GM12878 (cell line): ENCODE measurements at regions of chr14 and their contacts with region 1.

Region 1: GRCh38 chr14:95442633-95443021 is 73.8 kb downstream of the SYNE3 start:
- DNase-seq: peak; percentile 28
- ATAC-seq: peak; percentile 98
- H3K4me3 ChIP-seq: no peak overlapping the region
- H3K27ac ChIP-seq: no peak overlapping the region
- H3K4me1 ChIP-seq: no peaks in the 10 kb centered on the region
- H3K27me3 ChIP-seq: no peaks in the 10 kb centered on the region
- CTCF ChIP-seq: peak; percentile 78 to 92 (median 87)
- EP300 ChIP-seq: no peak
- POLR2A ChIP-seq: no peak
- RAD21 ChIP-seq: peak; percentile 95

Region 2: DNA sequence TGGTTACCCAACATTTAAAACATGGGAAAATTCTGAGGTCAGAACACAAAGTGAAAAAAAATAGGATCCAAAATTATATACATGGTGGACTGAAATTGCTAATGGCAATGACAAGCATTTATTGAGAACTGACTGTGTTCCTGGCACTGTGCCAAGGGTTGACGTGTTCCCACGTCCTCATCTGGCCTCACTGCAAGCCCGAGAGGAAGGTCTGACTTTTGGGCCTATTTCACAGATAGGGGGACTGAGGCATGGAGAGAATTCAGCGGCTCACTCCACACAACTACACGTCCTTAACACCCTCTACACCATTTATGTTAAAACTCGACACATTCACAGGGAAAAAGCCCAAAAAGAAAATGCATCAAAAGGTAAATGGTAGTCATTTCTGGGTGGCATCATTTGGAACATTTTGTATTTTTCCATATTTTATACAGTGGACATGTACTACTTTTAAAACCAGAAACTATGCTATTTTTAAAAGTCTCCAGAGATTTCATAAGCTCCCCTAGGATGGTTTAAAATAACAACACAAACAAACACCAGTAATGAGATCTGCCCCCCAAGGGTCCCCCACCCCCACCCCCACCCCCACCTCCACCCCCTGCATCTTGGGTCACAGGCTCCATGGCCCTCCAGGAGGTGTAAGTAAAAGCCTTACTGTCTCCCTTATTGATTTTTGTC is 150.6 kb before region 1 on chr14:
- CTCF ChIA-PET with region 1: no interaction called
- POLR2A ChIA-PET with region 1: no interaction called
- RAD21 ChIA-PET with region 1: no interaction called
- SMC1A ChIA-PET with region 1: no interaction called
- in situ Hi-C with region 1: no loop called
- intact Hi-C with region 1: no loop called
- DNase-seq: no peak
- ATAC-seq: peak; percentile 43; the same call in 2 of the 3 replicates
- H3K4me3 ChIP-seq: no peak overlapping the region
- H3K27ac ChIP-seq: no peak overlapping the region
- H3K4me1 ChIP-seq: 0 out of 2 replicates have a peak, but pooled peaks cover 3% of the 10 kb centered on the region
- H3K27me3 ChIP-seq: no peaks in the 10 kb centered on the region
- CTCF ChIP-seq: no peak
- EP300 ChIP-seq: no peak
- POLR2A ChIP-seq: no peak
- RAD21 ChIP-seq: no peak

Region 3: GRCh38 chr14:95424529-95424928 is 18.1 kb before region 1 on chr14:
- CTCF ChIA-PET with region 1: interaction called, 11 read pairs
- POLR2A ChIA-PET with region 1: no interaction called
- RAD21 ChIA-PET with region 1: interaction called, 6 read pairs
- SMC1A ChIA-PET with region 1: interaction called, 10 read pairs
- in situ Hi-C with region 1: no loop called
- intact Hi-C with region 1: no loop called
- DNase-seq: no peak
- ATAC-seq: no peak
- H3K4me3 ChIP-seq: no peak overlapping the region
- H3K27ac ChIP-seq: no peak overlapping the region
- H3K4me1 ChIP-seq: no peaks in the 10 kb centered on the region
- H3K27me3 ChIP-seq: no peaks in the 10 kb centered on the region
- CTCF ChIP-seq: no peak
- EP300 ChIP-seq: no peak
- POLR2A ChIP-seq: no peak
- RAD21 ChIP-seq: no peak

Region 4: DNA sequence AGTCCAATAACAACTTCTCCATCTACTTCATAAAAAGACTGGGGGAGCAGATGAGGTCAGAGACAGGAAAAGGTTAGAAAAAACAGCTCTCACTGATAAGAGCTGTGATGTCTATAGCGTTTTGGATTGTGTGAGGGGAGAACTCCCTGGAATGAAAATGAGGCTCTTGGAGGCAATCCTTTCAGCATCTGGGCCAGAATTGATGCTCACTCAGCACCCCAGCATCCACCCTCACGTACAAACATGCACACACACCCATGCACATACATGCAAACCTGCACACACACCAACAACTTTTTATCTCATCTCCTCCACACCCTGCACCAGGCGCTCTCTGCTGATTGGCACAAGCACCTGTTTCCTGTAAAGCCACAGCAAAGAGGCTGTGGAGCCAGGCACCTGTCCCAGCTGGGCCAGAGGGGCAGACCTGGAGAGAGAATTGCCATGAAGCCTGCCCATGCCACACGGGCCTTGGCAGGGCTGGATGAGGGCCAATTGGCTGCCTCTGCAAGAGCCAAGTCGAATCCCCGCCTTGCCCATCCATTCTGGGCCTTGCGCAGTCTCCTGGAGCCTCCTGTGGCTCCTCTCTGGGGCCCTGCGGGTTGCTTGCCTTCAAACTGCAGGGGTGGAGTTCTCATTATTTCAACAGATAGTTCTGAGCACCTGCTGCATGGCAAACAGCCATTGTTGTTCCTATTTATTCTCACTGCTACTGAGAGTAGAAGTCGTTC is 20.7 kb after region 1 on chr14:
- CTCF ChIA-PET with region 1: interaction called, 18 read pairs
- POLR2A ChIA-PET with region 1: no interaction called
- RAD21 ChIA-PET with region 1: interaction called, 5 read pairs
- SMC1A ChIA-PET with region 1: interaction called, 5 read pairs
- in situ Hi-C with region 1: no loop called
- intact Hi-C with region 1: no loop called
- DNase-seq: no peak
- ATAC-seq: no peak
- H3K4me3 ChIP-seq: no peak overlapping the region
- H3K27ac ChIP-seq: no peak overlapping the region
- H3K4me1 ChIP-seq: peaks cover 16% of the 10 kb centered on the region
- H3K27me3 ChIP-seq: no peaks in the 10 kb centered on the region
- CTCF ChIP-seq: no peak
- EP300 ChIP-seq: no peak
- POLR2A ChIP-seq: no peak
- RAD21 ChIP-seq: no peak

Region 5: GRCh38 chr14:95495538-95496025 is 53.0 kb after region 1 on chr14:
- CTCF ChIA-PET with region 1: interaction called, 10 read pairs
- POLR2A ChIA-PET with region 1: no interaction called
- RAD21 ChIA-PET with region 1: interaction called, 9 read pairs
- SMC1A ChIA-PET with region 1: interaction called, 8 read pairs
- in situ Hi-C with region 1: no loop called
- intact Hi-C with region 1: no loop called
- DNase-seq: peak; percentile 94
- ATAC-seq: peak; percentile 90
- H3K4me3 ChIP-seq: peak overlapping the region; percentile 37; the same call in 1 of the 2 replicates
- H3K27ac ChIP-seq: peak overlapping the region; percentile 98
- H3K4me1 ChIP-seq: peaks cover 60% of the 10 kb centered on the region
- H3K27me3 ChIP-seq: no peaks in the 10 kb centered on the region
- CTCF ChIP-seq: no peak
- EP300 ChIP-seq: peak; percentile 66 to 95
- POLR2A ChIP-seq: peak; percentile 66
- RAD21 ChIP-seq: peak; percentile 17; the same call in 1 of the 2 replicates

Region 6: DNA sequence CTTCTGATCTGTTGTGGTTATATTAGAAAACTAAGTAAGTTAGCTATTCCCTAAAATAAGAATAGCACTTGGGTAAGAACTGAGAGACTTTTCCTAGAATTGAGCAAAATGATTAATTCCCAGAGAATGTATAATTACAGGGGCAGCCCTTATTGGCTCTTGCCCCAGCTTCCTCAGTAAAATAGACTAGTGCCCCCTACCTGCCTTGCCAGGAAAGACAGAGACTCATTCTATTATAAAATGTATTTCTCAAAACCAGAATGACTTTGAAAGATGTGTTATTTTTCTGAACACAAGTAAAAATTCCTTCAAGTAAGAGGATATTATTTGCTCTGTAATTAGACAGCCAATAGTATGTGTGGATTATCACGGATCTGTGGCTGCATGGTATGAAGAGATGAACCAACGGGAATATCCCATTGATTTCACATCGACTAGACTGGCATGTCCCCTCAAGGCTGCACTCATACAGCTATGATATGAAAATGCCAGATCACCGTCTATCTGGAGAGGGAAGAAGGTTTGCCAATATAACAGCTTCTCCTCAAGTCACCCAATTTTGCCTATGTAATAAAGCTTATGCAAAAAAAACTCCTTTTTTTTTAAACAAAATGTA is 84.9 kb after region 1 on chr14:
- CTCF ChIA-PET with region 1: interaction called, 525 read pairs
- POLR2A ChIA-PET with region 1: interaction called, 10 read pairs
- RAD21 ChIA-PET with region 1: interaction called, 171 read pairs
- SMC1A ChIA-PET with region 1: interaction called, 187 read pairs
- in situ Hi-C with region 1: loop called (anchors 5 kb)
- intact Hi-C with region 1: loop called (anchors 1 kb)
- DNase-seq: no peak
- ATAC-seq: peak; percentile 71
- H3K4me3 ChIP-seq: no peak overlapping the region
- H3K27ac ChIP-seq: no peak overlapping the region
- H3K4me1 ChIP-seq: no peaks in the 10 kb centered on the region; the same call in 1 of the 2 replicates
- H3K27me3 ChIP-seq: no peaks in the 10 kb centered on the region
- CTCF ChIP-seq: peak; percentile 59 to 74 (median 71); a peak in 5 of 6 replicates
- EP300 ChIP-seq: no peak
- POLR2A ChIP-seq: no peak
- RAD21 ChIP-seq: peak; percentile 82

Region 7: DNA sequence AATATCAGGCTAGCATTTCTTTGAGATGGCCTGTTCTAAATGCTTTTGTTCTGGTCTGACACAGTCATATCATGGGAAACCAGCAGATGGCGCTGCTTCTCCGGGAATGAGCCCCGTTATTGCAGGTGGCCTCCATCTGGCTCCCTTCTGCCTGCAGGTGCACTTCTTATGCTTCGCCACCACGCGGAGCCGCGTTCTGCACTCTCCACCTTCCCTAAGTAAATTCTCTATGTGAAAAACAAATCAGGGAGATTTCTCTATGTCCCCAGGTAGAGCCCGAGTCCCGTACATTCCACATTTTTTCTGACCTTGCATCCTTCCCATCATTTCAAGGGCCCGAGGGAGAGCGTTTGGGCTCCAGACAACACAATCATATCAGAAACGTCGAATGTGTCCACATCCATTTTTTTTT is 118.4 kb after region 1 on chr14:
- CTCF ChIA-PET with region 1: interaction called, 16 read pairs
- POLR2A ChIA-PET with region 1: no interaction called
- RAD21 ChIA-PET with region 1: interaction called, 4 read pairs
- SMC1A ChIA-PET with region 1: interaction called, 4 read pairs
- in situ Hi-C with region 1: no loop called
- intact Hi-C with region 1: no loop called
- DNase-seq: peak; percentile 71
- ATAC-seq: peak; percentile 95
- H3K4me3 ChIP-seq: no peak overlapping the region
- H3K27ac ChIP-seq: no peak overlapping the region
- H3K4me1 ChIP-seq: peaks cover 6% of the 10 kb centered on the region; the same call in 1 of the 2 replicates
- H3K27me3 ChIP-seq: no peaks in the 10 kb centered on the region
- CTCF ChIP-seq: peak; percentile 94 to 100 (median 99)
- EP300 ChIP-seq: no peak
- POLR2A ChIP-seq: no peak
- RAD21 ChIP-seq: peak; percentile 97

Region 8: DNA sequence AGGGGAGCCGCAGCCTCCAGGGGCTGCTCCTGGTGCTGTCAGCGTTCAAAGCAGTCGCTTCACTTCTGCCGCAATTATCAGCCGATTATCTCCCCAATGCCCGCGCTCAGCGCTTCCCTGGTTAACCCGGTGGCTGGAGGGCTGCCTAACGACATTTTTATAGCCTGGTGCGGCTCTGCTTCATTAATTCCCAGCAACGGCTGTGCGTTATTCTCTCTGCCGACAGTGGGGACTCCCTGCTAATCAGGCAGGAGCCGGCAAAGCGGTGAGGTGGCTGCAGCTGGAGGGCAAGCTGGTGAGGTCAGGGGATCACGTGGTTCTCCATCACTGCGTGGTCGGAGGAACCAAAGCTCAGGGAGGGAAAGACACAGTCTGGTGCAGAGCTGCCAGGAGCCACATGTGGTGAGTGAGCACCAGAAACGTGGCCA is 155.2 kb after region 1 on chr14:
- CTCF ChIA-PET with region 1: no interaction called
- POLR2A ChIA-PET with region 1: no interaction called
- RAD21 ChIA-PET with region 1: no interaction called
- SMC1A ChIA-PET with region 1: no interaction called
- in situ Hi-C with region 1: no loop called
- intact Hi-C with region 1: no loop called
- DNase-seq: no peak
- ATAC-seq: peak; percentile 52
- H3K4me3 ChIP-seq: no peak overlapping the region
- H3K27ac ChIP-seq: no peak overlapping the region
- H3K4me1 ChIP-seq: no peaks in the 10 kb centered on the region; the same call in 1 of the 2 replicates
- H3K27me3 ChIP-seq: peaks cover 2 to 13% of the 10 kb centered on the region in 2 experiments
- CTCF ChIP-seq: no peak
- EP300 ChIP-seq: no peak
- POLR2A ChIP-seq: no peak
- RAD21 ChIP-seq: no peak